Activated CD4-positive, alpha-beta memory T cell treated with anti-CD3 and anti-CD28 coated beads for 36 hours (primary cell): ENCODE measurements at regions of chr5 and their contacts with region 1.

Region 1: DNA sequence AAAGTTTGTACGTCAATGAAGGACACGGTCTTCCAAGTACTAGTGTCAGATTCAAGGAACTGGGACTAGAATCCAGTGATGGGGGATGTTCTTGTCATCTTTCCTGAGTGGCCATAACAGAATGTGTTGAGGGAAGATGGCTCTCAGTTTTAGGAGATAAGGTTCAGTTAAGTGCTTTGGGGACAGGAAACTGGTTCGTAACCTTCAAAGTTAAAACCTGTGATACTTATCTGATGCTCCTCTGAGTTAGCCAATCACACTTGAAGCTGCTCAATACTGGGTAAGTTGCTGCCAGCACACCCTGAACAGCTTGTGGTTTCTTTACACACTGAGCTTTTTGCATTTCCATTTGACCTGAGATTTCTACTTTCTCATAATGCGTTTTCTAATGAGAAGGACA is 64.4 kb downstream of the PIK3R1 start:
- DNase-seq: peak; percentile 60
- H3K4me3 Mint-ChIP-seq: peak overlapping the region; percentile 76
- H3K27ac Mint-ChIP-seq: peak overlapping the region; percentile 99
- H3K4me1 Mint-ChIP-seq: peaks cover 94% of the 10 kb centered on the region
- H3K27me3 Mint-ChIP-seq: no peaks in the 10 kb centered on the region

Region 2: DNA sequence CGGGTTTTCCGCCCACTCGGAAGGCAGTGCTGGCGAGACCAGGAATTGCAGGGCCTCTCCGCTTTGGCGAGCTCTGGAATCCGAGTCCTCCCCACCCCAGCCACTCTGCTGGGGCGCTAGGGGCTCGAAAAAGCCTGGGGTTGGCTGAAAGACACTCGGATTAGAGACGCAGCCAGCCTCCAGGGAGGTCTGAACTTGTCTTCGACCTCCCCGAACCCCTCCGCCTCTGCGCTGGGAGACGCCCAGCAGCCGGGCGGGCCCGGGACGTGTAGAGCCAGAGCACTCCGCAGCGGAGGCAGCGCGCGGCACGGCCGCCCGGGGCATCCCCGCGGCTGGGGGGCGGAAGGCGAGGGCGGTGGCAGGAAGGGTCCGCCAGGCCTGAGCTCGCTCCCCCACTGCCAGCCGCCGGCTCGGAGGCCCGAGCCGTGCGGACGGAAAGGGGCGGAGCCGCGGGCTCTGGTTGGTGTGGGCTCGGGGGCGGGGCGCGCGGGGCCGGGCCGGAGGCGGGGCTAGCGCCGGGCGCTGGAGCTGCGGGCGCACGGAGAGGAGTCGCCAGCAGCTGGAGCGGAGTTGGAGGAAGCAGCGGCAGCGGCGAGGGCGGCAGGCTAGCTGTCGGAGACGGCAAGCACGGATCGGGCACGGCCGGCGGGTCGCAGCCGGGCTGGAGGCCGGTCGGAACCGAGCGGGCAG is 64.6 kb before region 1 on chr5 and contains the start of gene PIK3R1:
- CTCF ChIA-PET with region 1: interaction called, 4 read pairs
- POLR2A ChIA-PET with region 1: interaction called, 6 read pairs
- intact Hi-C with region 1: loop called (anchors 1 kb)
- DNase-seq: peak; percentile 95
- H3K4me3 Mint-ChIP-seq: peak within 1 kb of the TSS; percentile 91
- H3K27ac Mint-ChIP-seq: peak within 1 kb of the TSS; percentile 97
- H3K4me1 Mint-ChIP-seq: peaks cover 39% of the 10 kb centered on the region
- H3K27me3 Mint-ChIP-seq: no peaks in the 10 kb centered on the region
- total RNA-seq, gene PIK3R1: 35.3 to 40.9 TPM

Region 3: GRCh38 chr5:68303038-68303738 is 23.2 kb after region 1 on chr5:
- CTCF ChIA-PET with region 1: interaction called, 3 read pairs
- POLR2A ChIA-PET with region 1: no interaction called
- intact Hi-C with region 1: loop called (anchors 2 kb)
- DNase-seq: no peak
- H3K4me3 Mint-ChIP-seq: no peak overlapping the region
- H3K27ac Mint-ChIP-seq: peak overlapping the region; percentile 57
- H3K4me1 Mint-ChIP-seq: peaks cover 49% of the 10 kb centered on the region
- H3K27me3 Mint-ChIP-seq: no peaks in the 10 kb centered on the region

Region 4: DNA sequence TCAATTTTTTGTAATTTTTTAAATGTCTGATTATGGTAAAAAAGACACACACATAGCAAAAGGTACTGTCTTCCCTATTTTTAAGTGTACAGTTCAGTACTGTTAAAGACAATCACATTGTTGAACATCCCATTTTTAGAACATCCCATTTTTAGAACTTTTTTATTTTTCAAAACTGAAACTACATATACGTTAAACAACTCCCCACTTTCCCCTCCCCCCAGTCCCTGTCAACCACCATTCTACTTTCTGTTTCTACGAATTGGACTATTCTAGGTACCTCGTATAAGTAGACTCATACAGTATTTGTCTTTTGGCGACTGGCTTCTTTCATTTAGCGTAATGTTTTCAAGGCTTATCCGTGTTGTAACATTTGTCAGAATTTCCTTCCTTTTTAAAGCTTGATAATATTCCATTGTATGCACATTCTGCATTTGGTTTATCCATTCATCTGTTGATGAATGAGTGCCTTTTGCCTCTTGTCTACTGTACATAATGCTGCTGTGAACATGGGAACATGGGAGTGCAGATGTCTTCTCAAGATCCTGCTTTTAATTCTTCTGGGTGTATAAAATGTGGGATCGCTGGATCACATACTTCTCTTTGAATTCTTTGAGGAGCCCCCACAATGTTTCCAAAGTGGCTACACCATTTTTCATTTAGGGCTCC is 89.6 kb after region 1 on chr5:
- CTCF ChIA-PET with region 1: no interaction called
- POLR2A ChIA-PET with region 1: no interaction called
- intact Hi-C with region 1: loop called (anchors 2 kb)
- DNase-seq: peak; percentile 69
- H3K4me3 Mint-ChIP-seq: peak overlapping the region; percentile 13
- H3K27ac Mint-ChIP-seq: peak overlapping the region; percentile 36
- H3K4me1 Mint-ChIP-seq: peaks cover 35% of the 10 kb centered on the region
- H3K27me3 Mint-ChIP-seq: no peaks in the 10 kb centered on the region

Region 5: DNA sequence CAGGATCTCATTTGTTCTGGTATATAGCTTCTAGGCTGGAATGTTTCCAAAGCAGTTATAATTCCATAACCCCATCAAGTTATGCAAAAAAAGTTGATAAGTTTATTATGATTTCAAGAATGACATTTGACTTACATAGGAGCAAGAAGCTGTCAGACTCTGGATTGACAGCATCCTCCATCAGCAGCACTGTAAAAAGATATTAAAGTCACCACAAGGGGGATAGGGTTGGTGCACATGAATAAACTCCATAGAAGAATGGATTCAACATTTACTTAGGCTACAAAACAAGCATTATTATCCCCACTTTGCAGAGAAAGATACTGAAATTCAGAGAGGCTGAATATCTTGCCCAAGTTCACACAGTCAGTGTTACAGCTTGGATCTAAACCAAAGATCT is 604.9 kb after region 1 on chr5:
- CTCF ChIA-PET with region 1: no interaction called
- POLR2A ChIA-PET with region 1: no interaction called
- intact Hi-C with region 1: loop called (anchors 5 kb)
- DNase-seq: no peak
- H3K4me3 Mint-ChIP-seq: no peak overlapping the region
- H3K27ac Mint-ChIP-seq: no peak overlapping the region
- H3K4me1 Mint-ChIP-seq: peaks cover 29% of the 10 kb centered on the region
- H3K27me3 Mint-ChIP-seq: no peaks in the 10 kb centered on the region